ENCODE measurements at regions of chr9 and their contacts with region 1.

Region 1: DNA sequence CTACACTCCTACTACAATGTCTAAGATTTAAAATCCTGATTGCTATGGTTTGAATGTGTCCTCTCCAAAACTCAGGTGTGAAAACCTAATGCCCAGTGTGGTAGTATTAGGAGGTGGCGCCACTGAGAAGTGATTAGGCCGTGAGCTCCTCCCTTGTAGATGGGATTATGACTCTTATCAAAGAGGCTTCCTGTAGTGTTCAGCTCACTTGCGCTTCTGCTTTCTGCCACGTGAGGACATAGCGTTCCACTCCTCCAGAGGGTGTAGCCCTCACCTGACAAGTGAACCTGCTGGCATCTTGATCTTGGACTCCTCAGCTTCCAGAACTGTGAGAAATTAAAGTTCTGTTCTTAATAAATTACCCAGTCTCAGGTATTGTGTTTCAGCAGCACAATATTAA is 33.0 kb upstream of the WHRN start:
- DNase-seq: peak; percentile 68 to 74
- H3K4me3 ChIP-seq: no peak overlapping the region
- H3K4me3 Mint-ChIP-seq: no peak overlapping the region
- H3K27ac Mint-ChIP-seq: no peak overlapping the region
- H3K4me1 ChIP-seq: no peaks in the 10 kb centered on the region
- H3K4me1 Mint-ChIP-seq: no peaks in the 10 kb centered on the region
- H3K27me3 ChIP-seq: no peaks in the 10 kb centered on the region
- H3K27me3 Mint-ChIP-seq: peaks cover 7% of the 10 kb centered on the region
- CTCF ChIP-seq: peak; percentile 34 to 69

Region 2: GRCh38 chr9:114487607-114488300 is 50.5 kb before region 1 on chr9:
- CTCF ChIA-PET with region 1: no interaction called
- POLR2A ChIA-PET with region 1: no interaction called
- intact Hi-C with region 1: loop called (anchors 1 kb)
- DNase-seq: peak; percentile 74 to 84
- H3K4me3 ChIP-seq: no peak overlapping the region
- H3K4me3 Mint-ChIP-seq: no peak overlapping the region
- H3K27ac Mint-ChIP-seq: no peak overlapping the region
- H3K4me1 ChIP-seq: no peaks in the 10 kb centered on the region
- H3K4me1 Mint-ChIP-seq: no peaks in the 10 kb centered on the region
- H3K27me3 ChIP-seq: no peaks in the 10 kb centered on the region
- H3K27me3 Mint-ChIP-seq: no peaks in the 10 kb centered on the region
- CTCF ChIP-seq: peak; percentile 79 to 86

Region 3: GRCh38 chr9:114559830-114560513 is 21.7 kb after region 1 on chr9:
- CTCF ChIA-PET with region 1: interaction called, 9 read pairs
- POLR2A ChIA-PET with region 1: no interaction called
- intact Hi-C with region 1: loop called (anchors 1 kb)
- DNase-seq: no peak
- H3K4me3 ChIP-seq: no peak overlapping the region
- H3K4me3 Mint-ChIP-seq: no peak overlapping the region
- H3K27ac Mint-ChIP-seq: no peak overlapping the region
- H3K4me1 ChIP-seq: peaks cover 21% of the 10 kb centered on the region
- H3K4me1 Mint-ChIP-seq: peaks cover 14% of the 10 kb centered on the region
- H3K27me3 ChIP-seq: no peaks in the 10 kb centered on the region
- H3K27me3 Mint-ChIP-seq: no peaks in the 10 kb centered on the region
- CTCF ChIP-seq: no peak

Region 4: DNA sequence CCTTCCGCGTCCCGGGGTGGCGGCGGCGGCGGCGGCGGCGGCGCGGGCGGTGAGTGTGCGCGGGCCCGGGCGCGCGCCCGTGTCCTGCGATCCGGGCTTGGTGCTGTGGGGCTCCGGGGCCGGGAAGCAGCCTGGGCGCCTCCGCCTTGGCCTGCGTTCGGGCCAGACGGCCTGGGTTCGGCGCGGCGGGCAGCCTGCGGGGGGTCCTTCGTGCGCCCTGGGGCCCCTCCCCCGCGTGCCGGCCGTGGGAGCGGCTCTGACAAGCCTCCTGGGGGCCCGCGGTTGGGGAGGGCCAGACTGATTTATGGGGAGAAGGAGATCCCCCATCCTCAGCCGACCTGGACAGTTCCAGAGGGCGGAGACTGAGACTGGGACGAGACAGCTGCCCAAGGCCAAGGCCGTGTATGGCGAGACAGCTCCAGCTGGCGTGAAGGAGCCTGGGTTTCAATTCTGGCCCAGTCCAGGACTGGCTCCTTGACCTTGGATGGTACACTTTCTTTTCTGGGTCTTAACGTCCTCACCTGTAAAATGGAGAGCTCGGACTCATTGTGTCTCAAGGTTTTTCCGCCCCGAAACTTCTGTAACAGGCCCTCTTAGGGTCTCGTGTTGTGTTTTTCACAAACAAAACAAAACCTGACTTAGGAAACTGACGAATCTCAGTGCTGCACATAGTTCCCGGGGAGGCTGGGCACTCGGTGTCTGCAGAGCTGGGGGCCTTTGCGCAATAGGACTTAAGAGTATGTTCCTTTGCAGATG is 73.5 kb after region 1 on chr9:
- CTCF ChIA-PET with region 1: interaction called, 4 read pairs
- POLR2A ChIA-PET with region 1: no interaction called
- intact Hi-C with region 1: loop called (anchors 1 kb)
- DNase-seq: peak; percentile 70 to 71
- H3K4me3 ChIP-seq: peak overlapping the region; percentile 39
- H3K4me3 Mint-ChIP-seq: peak overlapping the region; percentile 75
- H3K27ac Mint-ChIP-seq: peak overlapping the region; percentile 82
- H3K4me1 ChIP-seq: 0 out of 2 replicates have a peak, but pooled peaks cover 10% of the 10 kb centered on the region
- H3K4me1 Mint-ChIP-seq: peaks cover 13% of the 10 kb centered on the region
- H3K27me3 ChIP-seq: no peaks in the 10 kb centered on the region
- H3K27me3 Mint-ChIP-seq: no peaks in the 10 kb centered on the region
- CTCF ChIP-seq: no peak

Region 5: DNA sequence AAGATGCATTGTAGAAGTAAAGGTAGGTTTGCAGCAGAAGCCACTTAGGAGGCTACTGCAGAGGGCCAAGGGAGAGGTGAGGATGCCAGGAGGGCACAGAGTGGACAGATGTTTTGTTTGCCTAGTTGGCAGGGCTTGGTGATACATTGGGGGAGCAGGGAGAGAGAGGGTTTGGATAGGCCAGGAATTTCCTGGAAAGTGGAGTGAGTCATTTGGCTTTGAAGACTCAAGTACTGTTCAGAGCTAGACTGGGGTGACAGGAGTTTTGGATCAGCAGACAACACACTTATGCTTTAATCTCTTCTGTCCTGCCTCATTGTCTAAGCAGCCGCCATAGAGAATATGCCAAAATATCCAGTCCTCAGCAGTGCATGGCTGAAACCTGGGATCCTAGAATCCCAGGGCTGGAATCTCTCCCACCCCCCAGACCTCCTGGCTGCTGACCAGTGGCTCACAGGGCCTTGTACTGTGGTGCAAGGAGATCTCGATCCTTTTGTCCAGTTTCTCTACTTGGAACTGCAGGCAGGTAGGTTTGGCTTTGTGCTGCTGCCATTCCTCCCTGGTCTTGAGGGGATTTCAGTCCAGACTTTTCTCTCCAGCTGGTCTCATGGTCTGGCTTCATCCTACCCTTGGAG is 83.9 kb after region 1 on chr9:
- CTCF ChIA-PET with region 1: no interaction called
- POLR2A ChIA-PET with region 1: no interaction called
- intact Hi-C with region 1: no loop called
- DNase-seq: no peak
- H3K4me3 ChIP-seq: no peak overlapping the region
- H3K4me3 Mint-ChIP-seq: no peak overlapping the region
- H3K27ac Mint-ChIP-seq: no peak overlapping the region
- H3K4me1 ChIP-seq: no peaks in the 10 kb centered on the region
- H3K4me1 Mint-ChIP-seq: no peaks in the 10 kb centered on the region
- H3K27me3 ChIP-seq: no peaks in the 10 kb centered on the region
- H3K27me3 Mint-ChIP-seq: no peaks in the 10 kb centered on the region
- CTCF ChIP-seq: no peak

Region 6: GRCh38 chr9:114653556-114654159 is 115.4 kb after region 1 on chr9:
- CTCF ChIA-PET with region 1: interaction called, 56 read pairs
- POLR2A ChIA-PET with region 1: no interaction called
- intact Hi-C with region 1: loop called (anchors 1 kb)
- DNase-seq: peak; percentile 72 to 85
- H3K4me3 ChIP-seq: no peak overlapping the region
- H3K4me3 Mint-ChIP-seq: no peak overlapping the region
- H3K27ac Mint-ChIP-seq: no peak overlapping the region
- H3K4me1 ChIP-seq: no peaks in the 10 kb centered on the region
- H3K4me1 Mint-ChIP-seq: no peaks in the 10 kb centered on the region
- H3K27me3 ChIP-seq: no peaks in the 10 kb centered on the region
- H3K27me3 Mint-ChIP-seq: no peaks in the 10 kb centered on the region
- CTCF ChIP-seq: peak; percentile 88 to 92

Measured in Caco-2 (cell line).